ENCODE measurements at regions of chr10 and their contacts with region 1.

Region 1: DNA sequence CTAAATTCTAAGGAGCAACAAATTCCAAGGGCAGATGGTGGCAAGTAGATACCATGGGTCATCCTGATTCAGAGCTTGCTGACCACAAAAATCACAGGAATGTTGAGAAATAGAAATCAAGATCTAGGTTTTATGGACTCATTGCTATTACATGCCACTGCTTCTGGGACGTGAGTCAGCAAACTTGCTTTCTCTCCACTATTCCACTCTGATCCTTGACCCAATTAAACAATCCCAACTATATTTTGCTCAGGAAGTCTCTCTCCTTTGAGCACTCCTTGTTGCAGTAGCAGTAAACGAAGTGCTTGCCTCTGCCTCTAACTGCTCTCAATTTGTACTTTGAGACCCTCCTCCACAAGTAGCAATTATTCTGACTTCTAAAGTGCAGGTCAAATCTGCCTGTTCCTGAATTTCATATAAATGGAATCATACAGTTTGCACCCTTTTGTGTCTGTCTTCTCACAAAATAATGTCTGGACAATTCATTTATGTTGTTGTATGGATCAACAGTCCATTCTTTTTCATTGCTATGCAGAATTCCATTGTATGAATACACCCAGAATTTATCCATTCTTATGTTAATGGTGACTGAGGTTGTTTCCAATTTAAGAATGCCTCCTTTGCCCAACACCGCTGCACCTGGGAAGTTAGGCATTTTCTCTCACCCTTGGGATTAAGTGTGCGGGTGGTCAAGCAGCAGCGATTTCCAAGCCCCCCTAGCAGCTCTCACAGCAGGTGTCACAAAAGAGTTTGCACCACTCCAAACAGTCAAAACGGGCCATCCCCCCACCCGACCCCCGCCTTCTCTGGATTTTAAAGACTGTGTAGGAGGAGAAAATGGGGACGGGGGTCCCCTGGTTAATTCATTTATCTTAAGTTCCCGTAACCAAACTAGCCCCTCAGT is 35.9 kb downstream of the ACSM6 start:
- DNase-seq: no peak
- ATAC-seq: no peak
- H3K4me3 ChIP-seq: peak overlapping the region in 11 of 12 donors; percentile 16 to 65 (median 54)
- H3K27ac ChIP-seq: no peak overlapping the region
- H3K4me1 ChIP-seq: peaks cover 0 to 7% (median 0%) of the 10 kb centered on the region in 12 donors
- H3K27me3 ChIP-seq: no peaks in the 10 kb centered on the region
- CTCF ChIP-seq: no peak
- POLR2A ChIP-seq: no peak

Region 2: DNA sequence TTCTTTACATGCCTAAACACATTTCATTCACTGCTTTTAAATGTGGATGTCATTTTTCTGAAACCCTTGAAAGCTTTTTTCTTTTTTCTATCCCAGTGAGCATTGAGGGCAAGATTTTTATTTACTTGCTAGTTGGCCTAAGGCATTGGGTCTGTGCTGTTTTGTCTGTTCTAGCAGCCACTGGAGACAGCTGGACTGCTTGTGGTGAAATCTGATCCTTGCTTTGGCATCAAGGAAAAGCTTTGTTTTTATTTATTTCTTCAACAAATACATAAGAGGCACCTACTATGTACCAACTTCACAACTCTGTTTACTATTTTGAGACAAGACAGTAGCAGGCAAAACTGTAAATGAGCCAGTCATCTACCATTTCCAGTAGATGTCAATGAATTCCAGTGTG is 89.3 kb after region 1 on chr10:
- intact Hi-C with region 1: no loop called
- DNase-seq: no peak
- ATAC-seq: no peak
- H3K4me3 ChIP-seq: no peak overlapping the region
- H3K27ac ChIP-seq: no peak overlapping the region
- H3K4me1 ChIP-seq: peaks cover 0 to 52% (median 10%) of the 10 kb centered on the region in 12 donors
- H3K27me3 ChIP-seq: no peaks in the 10 kb centered on the region
- CTCF ChIP-seq: no peak
- POLR2A ChIP-seq: no peak

Region 3: DNA sequence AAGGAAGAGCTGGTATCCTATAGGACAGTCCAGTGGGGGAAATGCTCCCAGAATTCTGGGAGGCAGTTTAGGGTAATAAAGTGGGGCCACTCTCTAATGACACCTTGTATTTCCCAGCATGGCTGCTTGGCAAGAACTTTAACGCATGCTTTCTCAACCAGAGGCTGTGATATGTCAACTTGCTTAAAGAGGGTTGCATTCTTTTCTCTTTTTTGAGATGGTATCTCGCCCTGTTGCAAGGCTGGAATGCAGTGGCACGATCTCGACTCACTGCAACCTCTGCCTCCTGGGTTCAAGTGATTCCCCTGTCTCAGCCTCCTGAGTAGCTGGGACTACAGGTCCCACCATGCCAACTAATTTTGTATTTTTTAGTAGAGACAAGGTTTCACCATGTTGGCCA is 388.1 kb after region 1 on chr10:
- intact Hi-C with region 1: loop called in 1 of 10 experiments (anchors 10 kb)
- DNase-seq: no peak
- ATAC-seq: no peak
- H3K4me3 ChIP-seq: no peak overlapping the region
- H3K27ac ChIP-seq: no peak overlapping the region
- H3K4me1 ChIP-seq: no peaks in the 10 kb centered on the region
- H3K27me3 ChIP-seq: no peaks in the 10 kb centered on the region
- CTCF ChIP-seq: no peak
- POLR2A ChIP-seq: no peak